Activated naive CD4-positive, alpha-beta T cell treated with anti-CD3 and anti-CD28 coated beads for 36 hours (primary cell): ENCODE measurements at regions of chr16 and their contacts with region 1.

Region 1: GRCh38 chr16:30650369-30651123 is at the start of gene PRR14:
- DNase-seq: peak; percentile 100
- H3K4me3 Mint-ChIP-seq: peak within 1 kb of the TSS; percentile 85
- H3K27ac Mint-ChIP-seq: peak within 1 kb of the TSS; percentile 91
- H3K4me1 Mint-ChIP-seq: peaks cover 22% of the 10 kb centered on the region
- H3K27me3 Mint-ChIP-seq: no peaks in the 10 kb centered on the region
- total RNA-seq, gene PRR14: 50.6 to 52.4 TPM

Region 2: GRCh38 chr16:30571695-30572600 is 78.6 kb before region 1 on chr16 and contains the start of gene ZNF688:
- CTCF ChIA-PET with region 1: no interaction called
- intact Hi-C with region 1: loop called (anchors 1 kb)
- DNase-seq: peak; percentile 94
- H3K4me3 Mint-ChIP-seq: peak within 1 kb of the TSS; percentile 89
- H3K27ac Mint-ChIP-seq: peak within 1 kb of the TSS; percentile 94
- H3K4me1 Mint-ChIP-seq: peaks cover 56% of the 10 kb centered on the region
- H3K27me3 Mint-ChIP-seq: no peaks in the 10 kb centered on the region
- total RNA-seq, gene ZNF688: 3.7 to 3.9 TPM

Region 3: DNA sequence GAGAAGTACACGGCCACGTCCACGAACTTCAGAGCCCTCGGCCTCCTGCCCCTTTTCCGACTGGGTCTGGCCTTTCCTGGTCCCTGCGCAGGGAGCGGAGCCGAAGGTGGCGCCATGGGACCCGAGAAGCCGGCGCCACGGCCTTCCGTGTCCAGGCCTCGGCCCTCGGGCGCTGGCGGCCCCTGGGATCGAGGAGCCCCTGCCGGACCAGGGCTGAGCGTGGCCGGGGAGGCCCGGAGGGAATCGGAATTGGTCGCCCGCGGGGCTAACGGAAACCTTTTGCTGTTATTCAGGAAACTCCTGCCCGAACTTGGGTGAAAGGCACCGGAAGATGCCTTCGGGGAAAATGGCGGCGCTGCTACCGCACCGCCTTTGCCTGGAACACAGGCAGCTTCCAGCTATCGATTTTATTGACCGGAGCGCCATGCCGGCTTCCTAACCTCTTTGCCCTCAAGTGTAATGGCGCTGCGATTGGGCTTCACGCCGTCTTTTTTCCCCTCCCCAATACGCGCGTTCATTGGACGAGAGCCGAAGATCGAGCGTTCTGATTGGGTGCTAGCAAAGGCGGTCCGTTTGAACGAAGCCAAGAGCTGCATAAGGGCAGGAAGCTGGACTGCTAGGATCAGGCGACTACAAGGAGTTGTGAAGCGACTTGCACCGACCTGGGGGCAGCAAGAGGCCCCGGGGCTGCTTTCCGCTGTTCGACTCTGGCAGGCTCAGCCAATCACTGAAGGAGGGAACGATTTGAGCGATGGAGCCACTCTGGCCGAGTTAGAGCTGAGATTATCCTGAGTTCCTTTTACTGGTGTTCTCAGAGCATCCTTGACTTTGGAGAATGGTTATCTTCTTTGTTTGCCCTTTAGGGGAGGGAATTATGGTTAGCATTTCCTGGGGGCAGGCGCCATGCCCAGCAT is 40.4 kb before region 1 on chr16 and contains the start of gene ZNF689:
- CTCF ChIA-PET with region 1: interaction called, 3 read pairs
- intact Hi-C with region 1: loop called (anchors 1 kb)
- DNase-seq: peak; percentile 98
- H3K4me3 Mint-ChIP-seq: peak within 1 kb of the TSS; percentile 83
- H3K27ac Mint-ChIP-seq: peak within 1 kb of the TSS; percentile 96
- H3K4me1 Mint-ChIP-seq: peaks cover 20% of the 10 kb centered on the region
- H3K27me3 Mint-ChIP-seq: no peaks in the 10 kb centered on the region
- total RNA-seq, gene ZNF689: 10.7 to 11.5 TPM

Region 4: GRCh38 chr16:30692381-30693064 is 42.0 kb after region 1 on chr16:
- CTCF ChIA-PET with region 1: interaction called, 17 read pairs
- intact Hi-C with region 1: loop called (anchors 1 kb)
- DNase-seq: no peak
- H3K4me3 Mint-ChIP-seq: no peak overlapping the region
- H3K27ac Mint-ChIP-seq: no peak overlapping the region
- H3K4me1 Mint-ChIP-seq: peaks cover 15% of the 10 kb centered on the region
- H3K27me3 Mint-ChIP-seq: no peaks in the 10 kb centered on the region